IMR-90 (cell line): ENCODE measurements at regions of chr15 and their contacts with region 1.

Region 1: GRCh38 chr15:88913017-88913849 is at the start of gene MFGE8:
- DNase-seq: peak; percentile 72
- ATAC-seq: peak; percentile 88
- H3K4me3 ChIP-seq: peak within 1 kb of the TSS; percentile 97
- H3K27ac ChIP-seq: peak within 1 kb of the TSS; percentile 83
- H3K4me1 ChIP-seq: peaks cover 27% of the 10 kb centered on the region
- H3K27me3 ChIP-seq: no peaks in the 10 kb centered on the region
- CTCF ChIP-seq: peak; percentile 26; the same call in 1 of the 2 replicates
- POLR2A ChIP-seq: peak; percentile 96
- RAD21 ChIP-seq: 0 out of 2 replicates have a peak, but pooled peaks have one; percentile 7
- total RNA-seq, gene MFGE8: 201 and 232 TPM in 2 replicates

Region 2: GRCh38 chr15:88897456-88898194 is 15.6 kb before region 1 on chr15:
- CTCF ChIA-PET with region 1: no interaction called
- POLR2A ChIA-PET with region 1: no interaction called
- dilution Hi-C with region 1: no loop called
- in situ Hi-C with region 1: no loop called
- intact Hi-C with region 1: no loop called
- DNase-seq: peak; percentile 71
- ATAC-seq: peak; percentile 89
- H3K4me3 ChIP-seq: no peak overlapping the region
- H3K27ac ChIP-seq: no peak overlapping the region
- H3K4me1 ChIP-seq: peaks cover 14% of the 10 kb centered on the region
- H3K27me3 ChIP-seq: no peaks in the 10 kb centered on the region
- CTCF ChIP-seq: peak; percentile 68
- POLR2A ChIP-seq: no peak
- RAD21 ChIP-seq: peak; percentile 47

Region 3: DNA sequence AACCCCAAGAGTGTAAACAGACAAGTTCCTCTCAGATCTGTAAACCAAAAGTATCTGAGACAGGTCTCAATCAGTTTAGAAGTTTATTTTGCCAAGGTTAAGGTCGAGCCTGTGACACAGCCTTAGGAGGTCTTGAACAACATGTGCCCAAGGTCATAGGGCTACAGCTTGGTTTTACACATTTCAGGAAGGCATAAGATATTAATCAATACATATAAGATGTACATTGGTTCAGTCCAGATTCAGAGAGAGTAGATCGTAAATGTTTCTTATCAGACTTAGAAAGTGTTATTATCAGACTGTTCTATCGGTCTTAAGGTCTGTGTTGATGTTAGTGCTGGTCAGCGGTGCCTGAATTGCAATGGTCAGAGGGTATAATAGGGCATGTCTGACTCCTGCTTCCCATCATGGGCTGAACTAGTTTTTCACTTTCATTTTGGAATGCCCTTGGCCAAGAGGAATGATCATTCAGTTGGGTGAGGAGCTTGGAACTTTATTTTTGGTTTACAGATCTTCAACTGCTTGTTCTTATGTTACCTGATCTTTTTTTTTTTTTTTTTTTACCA is 27.0 kb after region 1 on chr15:
- CTCF ChIA-PET with region 1: no interaction called
- POLR2A ChIA-PET with region 1: interaction called, 11 read pairs
- dilution Hi-C with region 1: no loop called
- in situ Hi-C with region 1: no loop called
- intact Hi-C with region 1: no loop called
- DNase-seq: no peak
- ATAC-seq: peak; percentile 40; the same call in 1 of the 2 replicates
- H3K4me3 ChIP-seq: no peak overlapping the region
- H3K27ac ChIP-seq: no peak overlapping the region
- H3K4me1 ChIP-seq: peaks cover 6% of the 10 kb centered on the region; the same call in 1 of the 2 replicates
- H3K27me3 ChIP-seq: no peaks in the 10 kb centered on the region
- CTCF ChIP-seq: no peak
- POLR2A ChIP-seq: no peak
- RAD21 ChIP-seq: no peak

Region 4: DNA sequence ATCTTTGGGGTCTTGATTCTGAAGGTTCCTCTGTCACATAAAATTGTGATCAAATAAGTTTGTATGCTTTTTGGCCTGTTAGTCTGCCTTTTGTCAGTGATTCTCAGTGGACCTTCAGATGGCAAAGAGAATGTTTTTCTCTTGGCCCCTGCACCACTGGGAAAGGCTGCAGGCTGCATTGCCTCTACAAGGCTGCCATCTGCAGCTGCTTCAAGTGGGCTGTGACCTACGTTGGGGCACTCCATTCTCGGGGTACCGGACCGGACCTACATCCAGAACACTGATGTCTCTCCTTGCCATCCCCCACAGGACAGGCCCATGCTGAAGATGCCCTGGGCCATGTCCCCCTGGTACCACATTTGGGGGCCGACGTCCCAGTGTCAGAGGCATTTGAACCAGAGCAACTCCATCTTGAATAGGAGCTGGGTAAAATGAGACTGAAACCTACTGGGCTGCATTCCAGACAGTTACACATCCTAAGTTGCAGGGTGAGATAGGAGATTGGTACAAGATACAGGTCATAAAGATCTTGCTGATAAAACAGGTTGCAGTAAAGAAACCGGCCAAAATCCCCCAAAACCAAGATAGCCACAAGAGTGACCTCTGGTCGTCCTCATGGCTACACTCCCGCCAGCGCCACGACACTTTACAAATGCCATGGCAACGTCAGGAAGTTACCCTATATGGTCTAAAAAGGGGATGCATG is 37.5 kb after region 1 on chr15:
- CTCF ChIA-PET with region 1: no interaction called
- POLR2A ChIA-PET with region 1: no interaction called
- dilution Hi-C with region 1: no loop called
- in situ Hi-C with region 1: no loop called
- intact Hi-C with region 1: no loop called
- DNase-seq: no peak
- ATAC-seq: no peak
- H3K4me3 ChIP-seq: no peak overlapping the region
- H3K27ac ChIP-seq: no peak overlapping the region
- H3K4me1 ChIP-seq: peaks cover 2% of the 10 kb centered on the region; the same call in 1 of the 2 replicates
- H3K27me3 ChIP-seq: no peaks in the 10 kb centered on the region
- CTCF ChIP-seq: no peak
- POLR2A ChIP-seq: no peak
- RAD21 ChIP-seq: no peak

Region 5: GRCh38 chr15:89003865-89004725 is 90.9 kb after region 1 on chr15:
- CTCF ChIA-PET with region 1: no interaction called
- POLR2A ChIA-PET with region 1: no interaction called
- dilution Hi-C with region 1: loop called (anchors 25 kb)
- in situ Hi-C with region 1: no loop called
- intact Hi-C with region 1: loop called (anchors 1 kb)
- DNase-seq: peak; percentile 73
- ATAC-seq: peak; percentile 80
- H3K4me3 ChIP-seq: no peak overlapping the region
- H3K27ac ChIP-seq: no peak overlapping the region
- H3K4me1 ChIP-seq: peaks cover 13% of the 10 kb centered on the region
- H3K27me3 ChIP-seq: no peaks in the 10 kb centered on the region
- CTCF ChIP-seq: peak; percentile 70
- POLR2A ChIP-seq: no peak
- RAD21 ChIP-seq: peak; percentile 81